CD4-positive, alpha-beta memory T cell (primary cell): ENCODE measurements at regions of chr12 and their contacts with region 1.

Region 1: GRCh38 chr12:57583008-57583831 is 7.8 kb upstream of the PIP4K2C start:
- DNase-seq: peak; percentile 70 to 77 (median 74)
- H3K4me3 ChIP-seq: no peak overlapping the region
- H3K4me3 Mint-ChIP-seq: no peak overlapping the region
- H3K27ac ChIP-seq: no peak overlapping the region
- H3K27ac Mint-ChIP-seq: peak overlapping the region in 2 of 7 donors; percentile 26 to 38
- H3K4me1 ChIP-seq: no peaks in the 10 kb centered on the region
- H3K4me1 Mint-ChIP-seq: peaks cover 3 to 7% (median 5%) of the 10 kb centered on the region in 4 donors
- H3K27me3 ChIP-seq: no peaks in the 10 kb centered on the region
- H3K27me3 Mint-ChIP-seq: peaks cover 6 to 9% of the 10 kb centered on the region in 2 donors

Region 2: GRCh38 chr12:57195611-57196371 is 387.4 kb before region 1 on chr12:
- CTCF ChIA-PET with region 1: no interaction called
- POLR2A ChIA-PET with region 1: no interaction called
- intact Hi-C with region 1: no loop called
- DNase-seq: no peak
- H3K4me3 ChIP-seq: no peak overlapping the region
- H3K4me3 Mint-ChIP-seq: no peak overlapping the region
- H3K27ac ChIP-seq: no peak overlapping the region
- H3K27ac Mint-ChIP-seq: no peak overlapping the region
- H3K4me1 ChIP-seq: no peaks in the 10 kb centered on the region
- H3K4me1 Mint-ChIP-seq: peaks cover 0 to 1% (median 0%) of the 10 kb centered on the region in 4 donors
- H3K27me3 ChIP-seq: no peaks in the 10 kb centered on the region
- H3K27me3 Mint-ChIP-seq: no peaks in the 10 kb centered on the region

Region 3: GRCh38 chr12:57604454-57604991 is 21.3 kb after region 1 on chr12 and contains the start of gene DTX3:
- CTCF ChIA-PET with region 1: interaction called, 17 read pairs
- POLR2A ChIA-PET with region 1: no interaction called
- intact Hi-C with region 1: no loop called
- DNase-seq: peak in 3 of 5 donors; percentile 33 to 43 (median 39)
- H3K4me3 ChIP-seq: peak within 1 kb of the TSS; percentile 60 to 66
- H3K4me3 Mint-ChIP-seq: peak within 1 kb of the TSS; percentile 85 to 90 (median 87)
- H3K27ac ChIP-seq: peak within 1 kb of the TSS; percentile 24
- H3K27ac Mint-ChIP-seq: peak within 1 kb of the TSS; percentile 63 to 96 (median 93)
- H3K4me1 ChIP-seq: peaks cover 30% of the 10 kb centered on the region
- H3K4me1 Mint-ChIP-seq: peaks cover 17 to 39% (median 28%) of the 10 kb centered on the region in 4 donors
- H3K27me3 ChIP-seq: no peaks in the 10 kb centered on the region
- H3K27me3 Mint-ChIP-seq: peaks cover 0 to 1% of the 10 kb centered on the region in 2 donors
- total RNA-seq, gene DTX3: 33.8 to 37.1 TPM

Region 4: DNA sequence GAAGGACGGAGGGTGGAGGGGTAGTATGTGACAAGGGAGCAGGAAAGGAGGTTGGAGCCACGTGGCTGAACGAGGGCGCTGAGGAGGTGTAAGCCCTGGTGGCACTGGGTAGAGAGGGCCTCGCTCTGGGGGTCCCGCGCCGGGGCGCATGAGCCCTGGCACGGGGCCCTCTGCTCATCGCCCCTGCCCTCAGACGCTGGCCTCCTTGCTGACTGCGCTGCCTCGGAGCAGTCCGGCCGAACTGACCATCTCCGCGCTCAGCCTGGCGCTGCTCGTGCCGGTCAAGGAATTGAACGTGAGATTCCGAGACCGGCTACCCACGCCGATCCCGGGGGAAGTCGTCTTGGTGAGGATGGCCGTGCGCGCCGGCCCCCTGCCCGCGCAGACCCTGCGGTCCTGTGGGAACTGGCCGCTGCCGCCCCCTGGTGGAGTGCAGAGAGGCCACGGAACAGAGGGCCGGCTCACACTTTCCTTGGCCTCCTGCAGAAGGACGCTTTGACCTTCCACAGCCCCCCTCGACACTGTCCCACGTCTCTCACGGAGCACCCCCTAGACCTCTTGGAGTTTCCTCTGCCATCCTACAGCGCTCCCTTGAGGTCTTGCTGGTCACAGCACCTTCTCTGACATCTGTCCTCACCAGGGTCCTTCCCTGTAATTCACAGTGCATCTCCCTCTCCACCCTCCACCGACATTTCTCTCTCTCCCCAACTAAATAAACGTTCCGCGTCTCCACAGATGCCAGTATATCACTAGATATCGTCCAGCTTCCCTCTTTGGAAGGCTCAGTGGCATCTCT is 38.5 kb after region 1 on chr12:
- CTCF ChIA-PET with region 1: interaction called, 124 read pairs
- POLR2A ChIA-PET with region 1: interaction called, 11 read pairs
- intact Hi-C with region 1: loop called (anchors 1 kb)
- DNase-seq: peak; percentile 34 to 57 (median 39)
- H3K4me3 ChIP-seq: peak overlapping the region in 1 of 2 donors; percentile 23
- H3K4me3 Mint-ChIP-seq: peak overlapping the region; percentile 63 to 90 (median 76)
- H3K27ac ChIP-seq: no peak overlapping the region
- H3K27ac Mint-ChIP-seq: peak overlapping the region in 2 of 7 donors; percentile 23 to 77
- H3K4me1 ChIP-seq: peaks cover 29% of the 10 kb centered on the region
- H3K4me1 Mint-ChIP-seq: peaks cover 24 to 36% (median 28%) of the 10 kb centered on the region in 4 donors
- H3K27me3 ChIP-seq: peaks cover 79% of the 10 kb centered on the region
- H3K27me3 Mint-ChIP-seq: peaks cover 82 to 87% of the 10 kb centered on the region in 2 donors

Region 5: GRCh38 chr12:57693659-57694458 is 110.6 kb after region 1 on chr12 and contains the start of gene OS9:
- CTCF ChIA-PET with region 1: interaction called, 13 read pairs
- POLR2A ChIA-PET with region 1: interaction called, 4 read pairs
- intact Hi-C with region 1: loop called (anchors 1 kb)
- DNase-seq: peak; percentile 93 to 100 (median 99)
- H3K4me3 ChIP-seq: peak within 1 kb of the TSS; percentile 75 to 82
- H3K4me3 Mint-ChIP-seq: no peak within 1 kb of the TSS
- H3K27ac ChIP-seq: peak within 1 kb of the TSS; percentile 79
- H3K27ac Mint-ChIP-seq: no peak within 1 kb of the TSS
- H3K4me1 ChIP-seq: peaks cover 26% of the 10 kb centered on the region
- H3K4me1 Mint-ChIP-seq: peaks cover 0 to 18% (median 5%) of the 10 kb centered on the region in 4 donors
- H3K27me3 ChIP-seq: no peaks in the 10 kb centered on the region
- H3K27me3 Mint-ChIP-seq: peaks cover 4 to 6% of the 10 kb centered on the region in 2 donors
- total RNA-seq, gene OS9: 189 to 195 TPM